GM10248 (cell line): ENCODE measurements at regions of chr5 and their contacts with region 1.

Region 1: DNA sequence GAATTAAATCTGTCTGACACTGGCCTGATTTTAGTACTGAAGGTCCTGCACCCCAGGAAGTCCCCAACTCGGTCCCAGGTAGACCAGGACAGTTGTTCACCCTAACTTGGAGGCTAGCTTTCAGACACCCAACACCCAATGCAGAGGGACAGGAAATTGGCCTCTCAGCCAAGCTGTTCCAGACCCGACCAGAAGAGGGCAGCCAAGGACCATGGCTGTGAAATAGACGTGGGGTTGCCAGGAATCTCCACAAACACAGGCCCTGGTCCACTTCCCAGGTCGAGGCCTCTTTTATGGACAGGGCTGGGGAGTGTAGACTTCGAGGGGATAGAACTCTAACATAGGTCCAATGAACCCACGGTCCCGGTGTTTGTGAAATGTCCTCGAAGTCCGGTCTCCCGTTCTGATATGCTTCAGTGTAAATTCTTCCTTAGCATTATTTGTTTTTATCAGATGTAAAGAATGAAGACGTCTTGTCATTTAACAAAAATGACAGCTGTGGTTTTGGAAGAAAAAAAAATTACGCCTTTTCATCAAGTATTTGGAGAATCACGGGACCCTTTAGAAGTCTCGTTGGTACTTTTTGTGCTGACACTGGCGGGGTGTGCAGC is 260.3 kb upstream of the ADAMTS16 start:
- DNase-seq: peak; percentile 78
- CTCF ChIP-seq: peak; percentile 98

Region 2: DNA sequence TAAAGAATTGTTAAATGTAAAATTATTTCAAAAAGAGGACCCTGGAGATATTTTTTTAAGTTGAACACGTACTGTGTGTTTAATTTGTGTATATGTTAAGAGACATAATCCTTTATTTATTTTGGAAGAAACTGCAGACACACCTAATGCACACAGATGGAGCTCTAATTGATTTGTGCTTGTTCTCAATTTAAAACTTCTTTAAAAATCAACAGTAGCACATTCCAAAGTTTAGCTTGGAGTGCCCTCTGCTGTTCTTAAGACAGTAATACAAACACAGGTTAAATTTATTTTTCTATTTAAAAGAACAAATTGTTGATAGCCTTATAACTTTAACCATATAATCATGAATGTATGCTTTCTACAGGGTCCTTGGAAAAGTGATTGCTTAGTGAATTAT is 17.3 kb before region 1 on chr5:
- CTCF ChIA-PET with region 1: interaction called, 12 read pairs
- POLR2A ChIA-PET with region 1: no interaction called
- DNase-seq: no peak
- CTCF ChIP-seq: peak; percentile 53

Region 3: GRCh38 chr5:4868109-4868735 is 11.6 kb before region 1 on chr5:
- CTCF ChIA-PET with region 1: interaction called, 23 read pairs
- POLR2A ChIA-PET with region 1: no interaction called
- DNase-seq: peak; percentile 70
- CTCF ChIP-seq: peak; percentile 80

Region 4: GRCh38 chr5:4941957-4942830 is 62.4 kb after region 1 on chr5:
- CTCF ChIA-PET with region 1: interaction called, 10 read pairs
- POLR2A ChIA-PET with region 1: no interaction called
- DNase-seq: peak; percentile 44
- CTCF ChIP-seq: peak; percentile 86

Region 5: GRCh38 chr5:5063533-5063953 is 183.7 kb after region 1 on chr5:
- CTCF ChIA-PET with region 1: interaction called, 13 read pairs
- POLR2A ChIA-PET with region 1: no interaction called
- DNase-seq: no peak
- CTCF ChIP-seq: peak; percentile 43

Region 6: DNA sequence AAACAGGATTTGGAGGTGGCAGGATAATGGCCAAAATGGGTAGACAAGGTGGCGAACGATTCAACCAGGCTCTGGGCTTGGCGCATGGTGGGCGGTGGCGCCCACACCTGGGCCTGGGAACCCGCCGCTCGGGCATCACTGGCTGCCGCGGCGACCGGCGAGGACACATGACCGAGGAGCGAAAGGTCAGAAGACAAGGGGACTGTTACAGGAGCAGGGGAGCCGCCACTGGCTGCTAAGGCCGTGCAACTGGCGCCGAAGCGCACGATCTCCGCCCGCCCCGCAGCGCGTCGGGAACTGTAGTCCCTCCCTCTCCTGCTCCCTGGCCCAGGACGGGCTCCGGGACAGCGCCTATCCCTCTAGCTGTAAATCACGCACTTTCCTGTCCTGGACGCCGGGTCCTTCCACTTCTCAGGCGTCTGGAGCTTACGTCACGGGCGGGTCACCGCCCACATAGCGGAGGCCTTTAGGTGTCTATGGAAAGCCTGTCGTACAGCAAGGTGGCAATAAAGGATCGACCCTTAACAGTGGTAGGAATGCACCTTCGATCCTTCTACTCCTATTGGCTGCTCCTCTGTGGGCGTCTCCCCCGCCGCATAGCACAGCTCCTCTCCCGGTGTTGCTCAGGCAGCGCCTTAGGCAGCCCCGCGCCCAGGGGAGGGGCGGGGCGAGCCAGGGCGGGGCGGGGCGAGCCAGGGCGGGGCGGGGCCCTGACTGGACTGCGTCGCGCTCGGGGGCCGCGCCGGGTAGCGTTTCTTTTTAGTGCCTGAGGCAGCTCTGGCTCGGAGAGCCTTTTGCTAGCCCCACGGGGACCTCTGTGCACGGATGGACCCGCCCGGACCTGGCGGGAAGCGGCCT is 542.4 kb after region 1 on chr5 and contains the start of gene ICE1:
- CTCF ChIA-PET with region 1: interaction called, 21 read pairs
- POLR2A ChIA-PET with region 1: no interaction called
- DNase-seq: peak; percentile 91
- CTCF ChIP-seq: no peak